ENCODE measurements at regions of chr2 and their contacts with region 1.

Region 1: GRCh38 chr2:64914735-64915509 is 74.3 kb upstream of the SLC1A4 start:
- DNase-seq: no peak
- H3K4me3 Mint-ChIP-seq: no peak overlapping the region
- H3K27ac Mint-ChIP-seq: no peak overlapping the region
- H3K4me1 Mint-ChIP-seq: peaks cover 42% of the 10 kb centered on the region
- H3K27me3 Mint-ChIP-seq: peaks cover 1% of the 10 kb centered on the region

Region 2: DNA sequence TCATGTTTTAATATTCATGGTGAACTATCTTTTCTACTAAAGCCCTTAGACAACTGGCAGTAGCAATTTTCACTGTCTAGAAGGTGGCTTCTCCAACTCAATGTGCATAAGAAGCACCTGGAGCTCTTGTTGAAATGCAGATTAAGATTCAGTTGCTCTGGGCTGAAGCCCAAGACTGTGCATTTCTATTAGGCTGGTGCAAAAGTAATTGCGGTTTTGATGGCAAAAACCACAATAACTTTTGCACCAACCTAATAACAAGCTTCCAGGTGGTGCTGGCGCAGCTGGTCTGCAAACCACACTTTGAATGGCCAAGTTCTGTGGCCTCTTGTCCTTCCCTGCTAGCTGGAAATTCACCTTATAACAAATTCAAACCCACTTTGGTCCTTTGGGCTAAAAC is 869.0 kb before region 1 on chr2:
- intact Hi-C with region 1: no loop called
- DNase-seq: no peak
- H3K4me3 Mint-ChIP-seq: no peak overlapping the region
- H3K27ac Mint-ChIP-seq: no peak overlapping the region
- H3K4me1 Mint-ChIP-seq: peaks cover 10% of the 10 kb centered on the region
- H3K27me3 Mint-ChIP-seq: no peaks in the 10 kb centered on the region

Region 3: GRCh38 chr2:64750817-64751285 is 164.1 kb before region 1 on chr2:
- intact Hi-C with region 1: no loop called
- DNase-seq: peak; percentile 97
- H3K4me3 Mint-ChIP-seq: peak overlapping the region; percentile 91
- H3K27ac Mint-ChIP-seq: peak overlapping the region; percentile 98
- H3K4me1 Mint-ChIP-seq: peaks cover 34% of the 10 kb centered on the region
- H3K27me3 Mint-ChIP-seq: no peaks in the 10 kb centered on the region

Region 4: GRCh38 chr2:64978514-64979268 is 63.8 kb after region 1 on chr2:
- intact Hi-C with region 1: loop called (anchors 1 kb)
- DNase-seq: no peak
- H3K4me3 Mint-ChIP-seq: no peak overlapping the region
- H3K27ac Mint-ChIP-seq: no peak overlapping the region
- H3K4me1 Mint-ChIP-seq: peaks cover 35% of the 10 kb centered on the region
- H3K27me3 Mint-ChIP-seq: peaks cover 2% of the 10 kb centered on the region

Region 5: GRCh38 chr2:65033178-65033577 is 118.3 kb after region 1 on chr2:
- intact Hi-C with region 1: loop called (anchors 1 kb)
- DNase-seq: no peak
- H3K4me3 Mint-ChIP-seq: no peak overlapping the region
- H3K27ac Mint-ChIP-seq: no peak overlapping the region
- H3K4me1 Mint-ChIP-seq: peaks cover 22% of the 10 kb centered on the region
- H3K27me3 Mint-ChIP-seq: peaks cover 2% of the 10 kb centered on the region

Region 6: DNA sequence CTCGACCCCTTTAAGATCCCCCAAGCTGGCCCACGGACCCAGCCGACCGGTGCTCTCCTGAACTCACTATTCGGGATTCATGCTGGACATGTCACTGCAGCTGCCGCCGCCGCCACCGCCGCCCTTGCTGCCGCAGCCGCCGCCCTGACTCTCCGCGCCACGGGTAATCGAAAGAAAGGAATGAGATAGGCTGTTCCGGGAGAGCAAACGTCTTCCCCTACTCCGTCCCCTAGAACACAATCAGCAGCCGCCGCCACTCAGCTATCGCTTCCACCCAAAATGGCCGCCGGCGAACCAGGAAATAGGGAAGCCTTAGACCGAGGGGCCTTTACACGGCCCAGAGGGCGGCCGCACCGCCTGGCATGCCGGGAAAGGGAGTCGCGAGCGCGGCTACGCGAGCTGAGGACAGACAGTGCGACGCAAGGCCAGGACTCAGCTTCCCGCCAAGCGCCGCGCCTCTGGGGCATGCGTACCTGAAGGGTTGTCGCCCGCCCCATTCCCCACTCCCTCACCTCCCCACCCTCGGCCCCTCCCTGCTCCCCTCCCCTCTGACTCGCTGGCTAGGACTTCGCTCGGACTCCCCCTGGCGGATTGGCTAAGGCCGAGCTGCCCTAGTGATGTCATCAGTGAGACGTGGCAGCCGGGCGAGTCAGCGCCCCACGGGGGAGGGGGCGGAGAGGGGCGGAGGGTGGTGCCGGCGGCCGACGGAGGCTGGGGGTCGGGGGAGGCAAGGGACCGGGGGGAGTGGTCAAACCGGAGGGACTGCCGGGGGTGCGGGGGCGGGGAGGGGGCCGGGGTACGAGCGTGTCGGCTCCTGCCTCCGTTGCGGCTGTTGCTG is 215.1 kb after region 1 on chr2 and contains the start of gene RAB1A:
- intact Hi-C with region 1: loop called (anchors 2 kb)
- DNase-seq: peak; percentile 98
- H3K4me3 Mint-ChIP-seq: peak within 1 kb of the TSS; percentile 98
- H3K27ac Mint-ChIP-seq: peak within 1 kb of the TSS; percentile 99
- H3K4me1 Mint-ChIP-seq: peaks cover 30% of the 10 kb centered on the region
- H3K27me3 Mint-ChIP-seq: peaks cover 16% of the 10 kb centered on the region
- total RNA-seq, gene RAB1A: 73.4 and 81.6 TPM in 2 replicates

Region 7: GRCh38 chr2:65576861-65577601 is 662.1 kb after region 1 on chr2:
- intact Hi-C with region 1: loop called (anchors 1 kb)
- DNase-seq: no peak
- H3K4me3 Mint-ChIP-seq: no peak overlapping the region
- H3K27ac Mint-ChIP-seq: no peak overlapping the region
- H3K4me1 Mint-ChIP-seq: no peaks in the 10 kb centered on the region
- H3K27me3 Mint-ChIP-seq: peaks cover 19% of the 10 kb centered on the region

Measured in activated T-helper 1 cell treated with anti-CD3 and anti-CD28 coated beads, Interleukin-12 subunit alpha, Interleukin-12 subunit beta, Interleukin-2, Interleukin-4 antibody, amounts not matched to agents 30 ng/mL and 10 ng/mL and 1 ng/mL, durations not matched to agents 14 hours and 24 hours and 36 hours (primary cell).